HAP-1 (cell line): ENCODE measurements at regions of chr3 and their contacts with region 1.

Region 1: GRCh38 chr3:42247576-42248027 is 18.4 kb downstream of the CCK start:
- DNase-seq: peak; percentile 64 to 76
- H3K4me3 ChIP-seq: no peak overlapping the region
- H3K4me1 ChIP-seq: no peaks in the 10 kb centered on the region
- H3K27me3 ChIP-seq: peaks cover 24% of the 10 kb centered on the region

Region 2: DNA sequence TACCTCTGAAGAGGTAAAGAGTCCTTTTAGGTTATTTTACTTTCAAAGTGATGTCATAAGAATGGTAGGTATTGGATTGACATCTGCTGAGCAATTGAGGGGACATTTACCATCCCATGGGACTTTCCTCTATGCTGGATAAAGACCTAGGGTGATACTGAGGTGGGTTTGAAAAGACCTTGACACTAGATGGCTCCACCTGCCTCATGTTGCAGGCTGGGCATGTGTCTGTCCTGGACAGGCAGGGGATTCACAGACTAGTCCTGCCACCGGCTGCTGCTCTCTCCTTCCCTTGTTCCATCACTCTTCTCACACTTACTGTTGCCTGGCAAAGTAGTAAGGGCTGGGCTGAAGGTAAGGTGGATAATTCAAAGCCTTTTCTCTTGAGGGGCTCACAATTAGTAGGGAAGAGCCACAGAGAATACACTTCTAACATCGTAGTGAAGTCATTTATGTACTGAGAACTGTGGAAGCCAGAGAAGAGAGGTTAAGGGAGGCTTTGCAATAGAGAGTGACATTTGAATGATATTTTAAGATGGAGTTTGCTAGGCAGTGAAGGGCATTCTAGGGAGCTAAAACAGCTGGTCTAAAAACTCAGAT is 128.7 kb before region 1 on chr3:
- in situ Hi-C with region 1: no loop called
- DNase-seq: peak; percentile 30 to 49
- H3K4me3 ChIP-seq: no peak overlapping the region
- H3K4me1 ChIP-seq: no peaks in the 10 kb centered on the region
- H3K27me3 ChIP-seq: no peaks in the 10 kb centered on the region

Region 3: DNA sequence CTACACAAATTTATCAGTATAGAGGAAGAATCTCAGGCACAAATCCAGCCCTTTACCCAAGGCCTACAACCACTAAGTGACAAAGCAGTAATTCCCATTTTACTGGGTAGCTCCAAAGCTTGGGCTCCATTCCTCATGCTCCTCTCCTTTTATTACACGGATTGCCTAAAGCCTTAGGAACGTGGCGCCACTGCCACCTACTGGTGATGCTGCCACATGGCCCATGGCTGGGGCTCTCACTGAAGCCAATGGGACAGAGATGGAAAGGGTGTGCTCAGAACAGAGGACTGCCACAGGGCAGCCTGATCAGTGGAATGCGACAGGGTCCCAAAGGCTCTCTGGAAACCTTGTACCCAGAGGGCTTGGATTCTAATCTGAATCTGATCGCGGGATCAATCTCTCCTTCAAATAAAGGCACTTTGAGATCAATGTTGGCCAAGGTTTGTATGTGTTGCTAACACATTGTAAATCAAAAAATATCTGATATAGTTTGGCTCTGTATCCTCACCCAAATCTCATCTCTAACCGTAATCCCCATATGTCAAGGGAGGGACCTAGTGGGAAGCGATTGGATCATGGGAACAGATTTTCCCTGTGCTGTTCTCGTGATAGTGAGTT is 196.3 kb after region 1 on chr3:
- in situ Hi-C with region 1: loop called (anchors 5 kb)
- DNase-seq: peak; percentile 78 to 90
- H3K4me3 ChIP-seq: no peak overlapping the region
- H3K4me1 ChIP-seq: peaks cover 3% of the 10 kb centered on the region; the same call in 1 of the 2 replicates
- H3K27me3 ChIP-seq: peaks cover 43% of the 10 kb centered on the region

Region 4: GRCh38 chr3:42539869-42540714 is 292.5 kb after region 1 on chr3:
- in situ Hi-C with region 1: loop called (anchors 5 kb)
- DNase-seq: peak; percentile 14 to 84
- H3K4me3 ChIP-seq: no peak overlapping the region
- H3K4me1 ChIP-seq: no peaks in the 10 kb centered on the region
- H3K27me3 ChIP-seq: no peaks in the 10 kb centered on the region

Region 5: DNA sequence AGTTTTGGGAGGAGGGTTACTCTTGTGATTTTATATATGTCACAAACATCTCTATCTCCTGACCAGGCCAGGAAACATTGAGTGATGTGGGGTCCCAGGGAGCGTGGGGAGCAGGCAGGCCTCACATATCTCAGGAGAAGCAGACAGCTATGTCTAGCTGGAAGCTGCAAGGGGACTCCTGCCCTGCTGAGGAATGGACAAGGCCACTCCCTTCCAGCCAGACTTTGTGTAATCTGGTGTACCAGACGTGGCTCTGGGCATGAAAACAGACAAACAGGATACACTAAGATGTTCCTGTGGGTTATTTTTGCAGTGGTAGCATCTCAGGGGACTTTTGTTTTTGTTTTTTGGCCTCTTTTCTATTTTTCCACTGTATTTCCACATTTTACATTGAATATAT is 604.8 kb after region 1 on chr3:
- in situ Hi-C with region 1: loop called (anchors 25 kb)
- DNase-seq: no peak
- H3K4me3 ChIP-seq: no peak overlapping the region
- H3K4me1 ChIP-seq: no peaks in the 10 kb centered on the region
- H3K27me3 ChIP-seq: peaks cover 23% of the 10 kb centered on the region